PC-3 (cell line): ENCODE measurements at regions of chr21 and their contacts with region 1.

Region 1: DNA sequence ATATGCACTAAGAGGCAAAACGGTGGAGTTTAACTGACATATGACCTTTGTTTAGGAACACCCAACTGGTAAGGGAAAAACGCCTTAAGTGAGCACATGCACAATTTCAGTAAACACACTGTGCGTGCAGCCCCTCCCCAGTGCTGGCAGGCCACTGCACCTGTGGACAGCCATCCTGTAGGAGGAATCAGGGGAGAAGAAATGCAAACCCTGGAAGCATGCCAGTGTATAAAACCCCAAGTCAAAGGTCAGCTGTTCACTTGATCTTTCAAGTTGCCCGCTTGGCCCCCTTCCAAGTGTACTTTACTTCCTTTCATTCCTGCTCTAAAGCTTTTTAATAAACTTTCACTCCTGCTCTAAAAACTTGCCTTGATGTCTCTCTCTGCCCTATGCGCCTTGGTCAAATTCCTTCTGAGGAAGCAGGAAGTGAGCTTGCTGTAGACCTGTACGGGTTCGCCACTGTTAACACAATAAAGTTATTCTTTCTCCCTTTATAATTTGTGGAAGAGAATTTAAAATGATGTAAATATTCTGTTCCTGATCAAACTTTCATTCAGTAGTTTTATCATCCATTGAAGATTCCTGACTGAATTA is 31.8 kb downstream of the USP25 start:
- DNase-seq: no peak
- ATAC-seq: no peak
- H3K4me3 ChIP-seq: no peak overlapping the region
- H3K27ac ChIP-seq: no peak overlapping the region
- H3K4me1 ChIP-seq: no peaks in the 10 kb centered on the region
- H3K27me3 ChIP-seq: no peaks in the 10 kb centered on the region
- CTCF ChIP-seq: no peak

Region 2: DNA sequence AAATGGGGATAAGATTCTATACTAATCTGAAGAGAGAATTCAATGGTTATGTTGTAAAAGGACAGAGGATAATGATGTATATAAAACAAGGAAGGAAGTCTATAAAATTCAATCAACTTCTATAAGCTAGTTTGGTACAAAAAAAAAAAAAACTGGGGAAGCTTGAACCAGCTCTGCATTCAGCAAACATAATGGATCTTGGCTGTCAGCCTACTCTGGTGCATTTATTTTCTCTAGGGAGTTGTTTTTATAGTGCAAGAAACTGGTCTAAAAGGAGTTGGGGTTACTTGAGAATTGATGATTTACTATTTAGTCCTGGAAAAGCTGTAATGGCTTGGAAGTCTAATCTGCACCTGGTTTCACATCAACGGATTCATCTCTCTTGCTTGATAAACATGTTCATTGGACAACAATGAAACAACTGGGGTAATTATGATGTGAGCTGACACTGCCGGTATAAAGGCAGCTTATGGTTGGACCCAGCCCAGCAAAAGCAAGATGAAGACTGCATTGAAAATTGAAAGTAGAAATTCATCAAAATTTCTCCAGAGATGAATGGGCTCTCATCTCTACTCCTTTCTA is 497.4 kb before region 1 on chr21:
- CTCF ChIA-PET with region 1: no interaction called
- POLR2A ChIA-PET with region 1: interaction called, 10 read pairs
- intact Hi-C with region 1: no loop called
- DNase-seq: no peak
- ATAC-seq: no peak
- H3K4me3 ChIP-seq: no peak overlapping the region
- H3K27ac ChIP-seq: no peak overlapping the region
- H3K4me1 ChIP-seq: no peaks in the 10 kb centered on the region
- H3K27me3 ChIP-seq: no peaks in the 10 kb centered on the region
- CTCF ChIP-seq: no peak

Region 3: GRCh38 chr21:15713412-15713811 is 48.2 kb before region 1 on chr21:
- CTCF ChIA-PET with region 1: no interaction called
- POLR2A ChIA-PET with region 1: no interaction called
- intact Hi-C with region 1: no loop called
- DNase-seq: no peak
- ATAC-seq: no peak
- H3K4me3 ChIP-seq: no peak overlapping the region
- H3K27ac ChIP-seq: no peak overlapping the region
- H3K4me1 ChIP-seq: 0 out of 2 replicates have a peak, but pooled peaks cover 5% of the 10 kb centered on the region
- H3K27me3 ChIP-seq: no peaks in the 10 kb centered on the region
- CTCF ChIP-seq: no peak

Region 4: DNA sequence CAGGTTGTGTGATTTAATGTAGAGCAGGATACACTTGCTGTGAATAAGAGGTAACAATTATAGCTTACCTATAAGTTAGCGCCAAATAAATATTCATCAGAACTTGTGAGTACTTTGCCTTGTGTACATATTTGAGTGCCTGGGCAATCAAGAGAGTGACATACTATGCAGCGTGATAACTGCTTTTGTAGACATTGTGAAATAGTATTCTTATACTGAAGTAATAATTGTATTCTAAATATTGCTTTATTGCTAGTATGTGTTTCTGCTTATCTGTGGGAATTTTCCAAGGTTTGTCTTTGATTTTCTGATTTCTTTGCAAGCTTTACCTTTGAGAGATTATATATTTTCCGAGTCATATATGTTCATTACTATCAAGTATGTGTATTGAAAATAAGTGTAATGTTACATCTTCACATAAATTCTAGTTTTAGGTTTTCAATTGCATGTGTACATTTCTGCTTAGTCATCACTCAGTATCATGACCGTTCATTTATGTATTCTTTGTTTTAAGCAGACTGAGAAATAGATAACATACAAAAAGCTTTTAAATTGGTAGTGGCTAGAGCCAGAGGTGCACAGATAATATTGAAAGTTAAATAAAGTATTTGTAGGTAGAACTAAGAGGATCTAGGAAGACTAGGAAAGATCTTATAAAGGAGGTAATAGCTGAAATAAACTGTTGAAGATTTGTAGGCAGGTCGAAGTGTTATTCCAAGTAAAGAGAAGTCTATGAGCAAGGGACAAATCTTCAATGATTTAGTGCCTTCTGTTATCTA is 12.3 kb before region 1 on chr21:
- CTCF ChIA-PET with region 1: no interaction called
- POLR2A ChIA-PET with region 1: no interaction called
- intact Hi-C with region 1: no loop called
- DNase-seq: peak; percentile 50
- ATAC-seq: peak; percentile 65
- H3K4me3 ChIP-seq: peak overlapping the region; percentile 11; the same call in 1 of the 2 replicates
- H3K27ac ChIP-seq: peak overlapping the region; percentile 13
- H3K4me1 ChIP-seq: peaks cover 33% of the 10 kb centered on the region
- H3K27me3 ChIP-seq: no peaks in the 10 kb centered on the region
- CTCF ChIP-seq: no peak